ENCODE measurements at regions of chrX and their contacts with region 1.

Region 1: DNA sequence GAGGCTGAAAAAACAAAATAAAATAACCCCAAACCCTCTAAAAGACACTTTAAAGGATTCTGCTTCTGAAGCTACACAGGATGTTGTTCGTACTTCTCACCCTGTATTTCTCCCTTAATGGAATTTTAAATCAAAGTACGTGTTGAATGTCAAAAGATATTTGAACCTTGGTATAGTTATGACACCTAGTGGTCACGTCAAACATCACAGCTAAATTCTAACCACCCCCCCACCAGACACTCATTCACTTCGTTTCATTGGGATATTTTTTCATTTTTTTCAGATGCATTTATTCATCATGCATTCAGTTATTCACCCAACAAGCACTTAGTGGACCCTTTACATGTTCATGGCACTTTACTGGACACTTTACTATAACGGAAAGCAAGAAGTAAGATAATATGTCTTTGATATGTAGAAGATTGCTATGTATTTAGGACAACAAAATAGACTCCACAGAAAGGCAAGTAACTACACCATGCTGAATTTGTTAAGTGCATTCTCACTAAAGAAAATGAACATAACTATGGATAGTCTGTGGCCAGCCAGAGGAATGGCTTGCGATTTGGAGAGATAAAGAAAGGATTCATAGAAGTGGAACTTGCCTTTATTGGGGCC is 62.5 kb upstream of the GPR174 start:
- DNase-seq: peak; percentile 4
- ATAC-seq: peak; percentile 62; the same call in 1 of the 2 replicates
- H3K4me3 ChIP-seq: no peak overlapping the region
- H3K27ac ChIP-seq: no peak overlapping the region
- H3K4me1 ChIP-seq: no peaks in the 10 kb centered on the region
- H3K27me3 ChIP-seq: no peaks in the 10 kb centered on the region
- CTCF ChIP-seq: peak; percentile 54
- POLR2A ChIP-seq: no peak
- RAD21 ChIP-seq: peak; percentile 55

Region 2: DNA sequence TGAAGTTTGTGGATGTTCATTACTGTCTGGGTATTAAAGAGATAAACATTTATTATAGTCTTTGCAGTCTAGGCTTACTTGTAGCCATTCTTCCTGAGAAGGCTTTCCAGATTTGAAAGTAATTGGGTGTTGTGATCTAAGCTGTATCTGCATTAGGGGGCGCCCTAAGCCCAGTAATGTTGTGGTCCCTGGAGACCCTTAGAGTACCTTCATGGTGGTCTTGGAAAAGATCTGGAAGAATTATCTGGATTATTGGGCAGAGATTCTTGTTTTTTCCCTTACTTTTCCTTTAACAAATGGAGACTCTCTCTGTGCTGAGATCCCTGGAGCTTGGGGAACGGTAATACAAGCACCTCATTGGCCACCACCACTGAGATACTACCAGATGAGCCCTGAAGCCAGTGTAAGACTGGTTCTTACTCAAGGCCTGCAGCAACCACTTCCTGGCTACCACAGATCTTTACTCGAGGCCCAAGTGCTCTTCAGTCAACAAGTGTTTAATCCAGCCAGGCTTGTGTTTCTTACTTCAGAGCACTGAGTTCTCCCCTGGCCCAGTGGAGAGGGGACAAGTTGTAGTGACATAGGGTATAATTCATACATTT is 486.0 kb before region 1 on chrX:
- CTCF ChIA-PET with region 1: interaction called, 3 read pairs
- POLR2A ChIA-PET with region 1: no interaction called
- dilution Hi-C with region 1: no loop called
- in situ Hi-C with region 1: no loop called
- intact Hi-C with region 1: loop called (anchors 5 kb)
- DNase-seq: no peak
- ATAC-seq: no peak
- H3K4me3 ChIP-seq: no peak overlapping the region
- H3K27ac ChIP-seq: no peak overlapping the region
- H3K4me1 ChIP-seq: no peaks in the 10 kb centered on the region
- H3K27me3 ChIP-seq: no peaks in the 10 kb centered on the region
- CTCF ChIP-seq: peak; percentile 40
- POLR2A ChIP-seq: no peak
- RAD21 ChIP-seq: peak; percentile 53

Region 3: DNA sequence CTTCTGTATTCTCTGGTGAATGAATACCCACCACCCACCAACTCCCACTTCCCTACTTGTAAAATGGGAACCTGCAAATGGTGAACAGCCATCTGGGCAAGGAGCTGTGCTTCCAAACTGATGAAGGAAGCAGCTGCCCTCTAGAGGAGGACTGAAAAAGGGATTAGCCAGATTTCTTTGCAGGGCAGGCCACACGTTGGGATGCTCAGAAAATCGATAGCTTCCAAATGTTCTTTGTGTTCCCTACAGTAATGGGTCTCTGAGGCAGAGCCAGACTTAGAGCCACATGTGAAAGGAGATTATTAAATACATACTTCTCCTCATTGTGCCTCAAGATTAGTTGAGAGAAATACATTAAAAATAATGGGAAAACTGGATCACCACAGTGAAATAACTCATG is 373.7 kb before region 1 on chrX:
- CTCF ChIA-PET with region 1: interaction called, 4 read pairs
- POLR2A ChIA-PET with region 1: no interaction called
- dilution Hi-C with region 1: no loop called
- in situ Hi-C with region 1: no loop called
- intact Hi-C with region 1: loop called (anchors 2 kb)
- DNase-seq: peak; percentile 41
- ATAC-seq: peak; percentile 73
- H3K4me3 ChIP-seq: no peak overlapping the region
- H3K27ac ChIP-seq: no peak overlapping the region
- H3K4me1 ChIP-seq: no peaks in the 10 kb centered on the region
- H3K27me3 ChIP-seq: no peaks in the 10 kb centered on the region
- CTCF ChIP-seq: peak; percentile 61
- POLR2A ChIP-seq: no peak
- RAD21 ChIP-seq: peak; percentile 68

Measured in IMR-90 (cell line).